Activated B cell treated with CpG ODN at 0.5 μM for 24 hours (primary cell): ENCODE measurements at regions of chr7 and their contacts with region 1.

Region 1: DNA sequence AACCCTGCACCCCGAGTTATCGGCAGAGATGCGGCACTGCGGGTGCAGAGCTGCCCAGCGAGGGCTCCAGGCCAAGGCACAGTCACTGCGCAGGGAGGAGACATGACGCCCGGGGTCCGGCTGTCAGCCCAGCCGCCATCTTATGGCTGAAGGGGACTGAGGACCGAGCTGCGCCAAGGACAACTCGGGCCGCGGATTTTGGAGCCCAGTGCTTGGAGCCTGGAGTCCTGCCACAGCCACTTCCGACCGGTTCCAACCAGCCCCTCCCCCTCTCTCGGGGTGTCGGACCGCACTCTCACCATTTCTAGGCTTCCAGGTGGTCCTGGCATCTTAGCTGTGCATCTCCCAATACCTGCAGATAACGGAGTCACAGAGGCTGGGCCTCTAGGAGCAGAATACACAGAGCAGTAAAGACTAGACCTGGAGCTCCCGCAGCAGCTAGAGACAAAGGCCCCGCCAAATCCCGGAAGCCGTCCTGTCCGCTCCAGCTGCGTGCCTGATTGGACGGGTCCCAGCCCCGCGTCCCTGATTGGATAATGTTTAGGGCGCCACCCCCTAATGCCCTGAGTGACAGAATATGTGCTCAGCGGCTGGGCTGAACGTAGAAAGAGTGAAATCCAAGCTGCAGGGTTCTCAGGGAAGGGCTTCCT is at the start of gene ZNF680:
- DNase-seq: peak; percentile 75
- ATAC-seq: peak; percentile 100
- H3K4me3 Mint-ChIP-seq: peak within 1 kb of the TSS; percentile 99
- H3K27ac Mint-ChIP-seq: peak within 1 kb of the TSS; percentile 93
- H3K4me1 Mint-ChIP-seq: peaks cover 28% of the 10 kb centered on the region
- H3K27me3 Mint-ChIP-seq: no peaks in the 10 kb centered on the region
- CTCF ChIP-seq: no peak
- total RNA-seq, gene ZNF680: 17.1 and 22.0 TPM in 2 replicates

Region 2: DNA sequence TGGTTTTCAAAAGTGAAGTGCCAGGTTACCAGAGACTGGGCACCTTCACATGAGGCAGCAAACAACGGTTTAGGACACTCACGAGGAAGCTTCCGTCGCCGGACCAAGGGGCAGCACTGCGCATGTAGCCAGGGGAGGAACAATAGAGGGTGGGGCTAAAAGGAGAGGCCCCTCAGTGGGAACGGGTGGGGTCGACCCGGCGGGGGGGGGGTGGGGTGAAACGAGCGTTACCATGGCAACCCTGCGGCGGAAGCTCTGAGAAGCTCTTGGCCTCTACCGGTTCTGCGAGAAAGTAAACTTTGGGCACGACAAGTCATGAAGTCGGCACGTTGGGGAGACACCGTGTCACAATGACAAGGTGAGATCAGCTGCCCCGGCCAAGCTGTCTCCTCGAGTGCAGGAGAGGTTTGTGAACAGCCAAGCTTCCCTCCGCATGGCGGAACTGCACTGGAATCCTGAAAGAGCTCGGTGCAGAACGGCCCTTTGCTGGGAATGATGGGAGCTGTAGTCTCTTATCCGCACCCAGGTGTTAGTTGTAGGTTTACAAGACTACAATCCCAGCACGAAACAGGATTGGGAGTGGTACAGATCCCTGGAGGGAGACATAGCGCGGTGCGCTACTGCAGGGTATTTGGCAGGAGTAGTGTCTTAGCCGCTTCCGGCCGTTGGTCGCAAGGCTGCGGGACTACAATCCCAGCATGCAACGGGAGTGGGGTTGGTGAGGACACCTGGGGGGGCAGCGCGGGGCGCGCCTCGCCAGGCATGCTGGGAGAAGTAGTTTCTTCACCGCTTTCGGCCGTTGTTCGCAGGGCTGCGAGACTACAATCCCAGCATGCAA is 636.9 kb before region 1 on chr7:
- CTCF ChIA-PET with region 1: no interaction called
- POLR2A ChIA-PET with region 1: interaction called, 12 read pairs
- intact Hi-C with region 1: loop called (anchors 1 kb)
- DNase-seq: peak; percentile 63
- ATAC-seq: peak; percentile 89
- H3K4me3 Mint-ChIP-seq: peak overlapping the region; percentile 90
- H3K27ac Mint-ChIP-seq: peak overlapping the region; percentile 93
- H3K4me1 Mint-ChIP-seq: peaks cover 4% of the 10 kb centered on the region
- H3K27me3 Mint-ChIP-seq: no peaks in the 10 kb centered on the region
- CTCF ChIP-seq: no peak

Region 3: DNA sequence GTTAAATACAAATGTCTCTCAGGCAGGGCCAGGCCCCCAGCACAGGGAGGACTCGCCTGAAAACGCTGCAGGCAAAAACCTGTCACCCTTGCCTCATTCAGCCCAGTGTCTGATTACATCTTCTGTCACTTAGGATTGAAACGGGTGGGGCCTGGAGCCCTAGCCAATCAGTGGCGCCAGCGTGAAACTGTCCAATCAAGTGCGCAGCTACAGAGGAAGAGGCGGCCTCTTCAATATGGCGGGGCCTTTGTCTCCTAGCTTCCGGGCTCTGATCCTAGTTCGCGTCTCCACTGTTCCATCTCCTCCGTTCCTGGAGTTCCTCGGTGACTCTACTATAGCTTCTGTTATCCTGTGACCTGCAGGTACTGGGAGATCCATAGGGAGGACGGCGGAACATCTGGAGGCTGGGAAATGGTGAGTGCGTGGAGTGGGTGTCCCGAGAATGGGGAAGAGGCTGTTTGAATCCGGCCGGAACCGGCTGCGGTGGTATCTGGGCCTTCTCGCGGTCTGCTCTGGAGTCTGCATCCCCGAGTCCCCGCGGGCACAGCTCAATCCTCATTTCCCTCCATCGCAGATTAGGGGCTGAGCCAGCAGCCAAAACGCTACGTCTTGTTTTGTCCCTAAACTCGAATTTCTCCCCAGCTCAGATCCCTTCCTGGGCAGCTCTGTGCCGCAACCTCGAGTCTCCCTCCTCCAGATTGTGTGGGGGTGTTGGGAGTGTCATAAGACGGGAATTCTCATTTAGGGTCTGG is 248.8 kb before region 1 on chr7 and contains the start of gene ZNF736:
- CTCF ChIA-PET with region 1: no interaction called
- POLR2A ChIA-PET with region 1: interaction called, 19 read pairs
- intact Hi-C with region 1: no loop called
- DNase-seq: peak; percentile 70
- ATAC-seq: peak; percentile 100
- H3K4me3 Mint-ChIP-seq: peak within 1 kb of the TSS; percentile 100
- H3K27ac Mint-ChIP-seq: peak within 1 kb of the TSS; percentile 99
- H3K4me1 Mint-ChIP-seq: peaks cover 41% of the 10 kb centered on the region
- H3K27me3 Mint-ChIP-seq: no peaks in the 10 kb centered on the region
- CTCF ChIP-seq: no peak
- total RNA-seq, gene ZNF736: 54.4 and 71.6 TPM in 2 replicates

Region 4: GRCh38 chr7:64541438-64542359 is 21.1 kb before region 1 on chr7:
- CTCF ChIA-PET with region 1: no interaction called
- POLR2A ChIA-PET with region 1: no interaction called
- intact Hi-C with region 1: loop called (anchors 2 kb)
- DNase-seq: no peak
- ATAC-seq: no peak
- H3K4me3 Mint-ChIP-seq: no peak overlapping the region
- H3K27ac Mint-ChIP-seq: no peak overlapping the region
- H3K4me1 Mint-ChIP-seq: peaks cover 17% of the 10 kb centered on the region
- H3K27me3 Mint-ChIP-seq: no peaks in the 10 kb centered on the region
- CTCF ChIP-seq: no peak

Region 5: GRCh38 chr7:64686493-64687184 is 123.9 kb after region 1 on chr7:
- CTCF ChIA-PET with region 1: no interaction called
- POLR2A ChIA-PET with region 1: interaction called, 3 read pairs
- intact Hi-C with region 1: loop called (anchors 5 kb)
- DNase-seq: peak; percentile 29
- ATAC-seq: peak; percentile 84
- H3K4me3 Mint-ChIP-seq: peak overlapping the region; percentile 79
- H3K27ac Mint-ChIP-seq: peak overlapping the region; percentile 99
- H3K4me1 Mint-ChIP-seq: peaks cover 70% of the 10 kb centered on the region
- H3K27me3 Mint-ChIP-seq: no peaks in the 10 kb centered on the region
- CTCF ChIP-seq: no peak

Region 6: DNA sequence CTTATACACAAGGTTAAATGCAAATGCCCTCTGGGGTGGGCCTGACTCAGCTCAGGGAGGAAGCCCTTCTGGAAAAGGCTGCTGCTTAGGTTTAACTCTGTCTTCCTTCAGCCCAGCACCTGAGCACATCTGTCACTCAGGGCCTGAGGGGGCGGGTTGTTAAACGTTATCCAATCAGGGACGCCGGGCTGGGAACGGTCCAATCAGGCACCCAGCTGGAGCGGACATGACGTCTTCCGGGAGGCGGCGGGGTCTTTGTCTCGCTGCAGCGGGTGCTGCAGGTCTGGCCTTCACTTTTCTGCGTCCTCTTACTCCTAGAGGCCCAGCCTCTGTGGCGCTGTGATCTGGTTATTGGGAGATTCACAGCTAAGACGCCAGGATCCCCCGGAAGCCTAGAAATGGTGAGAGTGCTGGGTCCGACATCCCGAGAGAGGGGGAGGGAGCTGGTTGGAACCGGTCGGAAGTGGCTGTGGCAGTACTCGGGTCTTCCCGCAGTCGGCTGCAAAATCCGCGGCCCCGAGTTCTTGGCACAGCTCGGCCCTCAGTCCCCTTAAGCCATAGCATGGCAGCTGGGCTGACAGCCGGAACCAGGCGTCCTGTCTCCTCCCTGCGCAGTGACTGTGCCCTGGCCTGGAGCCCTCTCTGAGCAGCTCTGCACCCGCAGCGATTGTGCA is 231.6 kb after region 1 on chr7 and contains the start of gene ZNF138:
- CTCF ChIA-PET with region 1: no interaction called
- POLR2A ChIA-PET with region 1: interaction called, 9 read pairs
- intact Hi-C with region 1: loop called (anchors 1 kb)
- DNase-seq: peak; percentile 83
- ATAC-seq: peak; percentile 99
- H3K4me3 Mint-ChIP-seq: peak within 1 kb of the TSS; percentile 99
- H3K27ac Mint-ChIP-seq: peak within 1 kb of the TSS; percentile 98
- H3K4me1 Mint-ChIP-seq: peaks cover 27% of the 10 kb centered on the region
- H3K27me3 Mint-ChIP-seq: no peaks in the 10 kb centered on the region
- CTCF ChIP-seq: no peak
- total RNA-seq, gene ZNF138: 14.2 and 17.8 TPM in 2 replicates

Region 7: DNA sequence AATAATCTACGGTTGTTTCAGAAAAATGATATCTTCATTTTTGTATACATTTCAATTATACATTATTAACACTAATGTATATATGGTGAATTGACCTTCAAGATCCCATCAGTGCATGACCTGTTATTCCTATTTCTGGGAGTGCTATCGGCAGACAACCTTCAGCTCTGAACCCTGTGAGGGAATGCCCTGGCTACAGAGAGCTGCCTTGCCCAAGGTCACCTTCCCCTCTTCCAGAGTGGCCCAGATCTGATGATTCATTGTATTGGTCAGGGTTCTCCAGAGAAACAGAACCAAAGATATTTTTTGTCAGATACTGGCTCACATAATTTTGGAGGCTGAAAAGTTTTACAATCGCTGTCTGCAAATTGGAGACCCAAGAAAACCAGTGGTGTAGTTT is 1046.4 kb after region 1 on chr7:
- CTCF ChIA-PET with region 1: no interaction called
- POLR2A ChIA-PET with region 1: no interaction called
- intact Hi-C with region 1: no loop called
- DNase-seq: no peak
- ATAC-seq: no peak
- H3K4me3 Mint-ChIP-seq: no peak overlapping the region
- H3K27ac Mint-ChIP-seq: no peak overlapping the region
- H3K4me1 Mint-ChIP-seq: no peaks in the 10 kb centered on the region
- H3K27me3 Mint-ChIP-seq: peaks cover 21% of the 10 kb centered on the region
- CTCF ChIP-seq: no peak